GM12878 (cell line): ENCODE measurements at regions of chr3 and their contacts with region 1.

Region 1: DNA sequence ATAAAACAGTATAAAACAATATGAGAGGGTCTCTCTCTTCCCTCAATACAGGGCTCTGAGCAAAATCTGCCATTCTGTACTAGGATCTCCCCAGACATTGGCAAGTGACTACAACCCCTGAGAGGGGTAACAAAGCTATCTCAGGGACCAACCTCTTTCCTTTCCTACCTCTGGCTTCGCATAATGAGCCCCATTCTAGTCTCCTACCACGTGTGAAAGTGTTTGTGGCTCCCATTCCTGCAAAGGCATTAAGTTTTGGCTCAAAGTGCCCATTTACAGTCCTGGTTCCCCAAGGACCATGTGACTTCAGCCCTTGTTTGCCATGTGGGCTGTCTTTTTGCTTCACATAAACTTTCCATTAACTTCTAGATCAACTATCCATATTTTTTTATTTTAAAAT is 46.4 kb downstream of the SCN11A start:
- DNase-seq: no peak
- ATAC-seq: no peak
- H3K4me3 ChIP-seq: no peak overlapping the region
- H3K27ac ChIP-seq: no peak overlapping the region
- H3K4me1 ChIP-seq: no peaks in the 10 kb centered on the region
- H3K27me3 ChIP-seq: no peaks in the 10 kb centered on the region
- CTCF ChIP-seq: no peak
- EP300 ChIP-seq: no peak
- POLR2A ChIP-seq: no peak
- RAD21 ChIP-seq: no peak

Region 2: GRCh38 chr3:39021029-39021428 is 15.7 kb after region 1 on chr3:
- CTCF ChIA-PET with region 1: interaction called, 241 read pairs
- POLR2A ChIA-PET with region 1: interaction called, 3 read pairs
- RAD21 ChIA-PET with region 1: interaction called, 96 read pairs
- SMC1A ChIA-PET with region 1: interaction called, 145 read pairs
- in situ Hi-C with region 1: no loop called
- intact Hi-C with region 1: no loop called
- DNase-seq: peak; percentile 54
- ATAC-seq: peak; percentile 79
- H3K4me3 ChIP-seq: no peak overlapping the region
- H3K27ac ChIP-seq: no peak overlapping the region
- H3K4me1 ChIP-seq: peaks cover 3% of the 10 kb centered on the region; the same call in 1 of the 2 replicates
- H3K27me3 ChIP-seq: no peaks in the 10 kb centered on the region
- CTCF ChIP-seq: no peak
- EP300 ChIP-seq: no peak; a peak in 1 of 4 replicates
- POLR2A ChIP-seq: no peak
- RAD21 ChIP-seq: no peak